Calu3 (cell line): ENCODE measurements at regions of chr19 and their contacts with region 1.

Region 1: GRCh38 chr19:15418588-15419412 is at the start of gene AKAP8L:
- DNase-seq: peak; percentile 94
- H3K4me3 Mint-ChIP-seq: peak within 1 kb of the TSS; percentile 97
- H3K27ac Mint-ChIP-seq: peak within 1 kb of the TSS; percentile 96
- H3K4me1 Mint-ChIP-seq: peaks cover 14% of the 10 kb centered on the region
- H3K27me3 Mint-ChIP-seq: no peaks in the 10 kb centered on the region
- CTCF ChIP-seq: peak; percentile 49
- total RNA-seq, gene AKAP8L: 94.0 and 96.8 TPM in 2 replicates

Region 2: GRCh38 chr19:15365264-15365663 is 53.5 kb before region 1 on chr19:
- CTCF ChIA-PET with region 1: no interaction called
- intact Hi-C with region 1: no loop called
- DNase-seq: no peak
- H3K4me3 Mint-ChIP-seq: no peak overlapping the region
- H3K27ac Mint-ChIP-seq: no peak overlapping the region
- H3K4me1 Mint-ChIP-seq: no peaks in the 10 kb centered on the region
- H3K27me3 Mint-ChIP-seq: no peaks in the 10 kb centered on the region
- CTCF ChIP-seq: no peak

Region 3: GRCh38 chr19:15379083-15379995 is 39.5 kb before region 1 on chr19 and contains the start of gene AKAP8:
- CTCF ChIA-PET with region 1: interaction called, 4 read pairs
- intact Hi-C with region 1: loop called (anchors 2 kb)
- DNase-seq: peak; percentile 93
- H3K4me3 Mint-ChIP-seq: peak within 1 kb of the TSS; percentile 77
- H3K27ac Mint-ChIP-seq: peak within 1 kb of the TSS; percentile 98
- H3K4me1 Mint-ChIP-seq: no peaks in the 10 kb centered on the region
- H3K27me3 Mint-ChIP-seq: no peaks in the 10 kb centered on the region
- CTCF ChIP-seq: no peak
- total RNA-seq, gene AKAP8: 35.8 and 38.0 TPM in 2 replicates

Region 4: GRCh38 chr19:15463861-15464371 is 45.1 kb after region 1 on chr19:
- CTCF ChIA-PET with region 1: no interaction called
- intact Hi-C with region 1: no loop called
- DNase-seq: no peak
- H3K4me3 Mint-ChIP-seq: no peak overlapping the region
- H3K27ac Mint-ChIP-seq: no peak overlapping the region
- H3K4me1 Mint-ChIP-seq: no peaks in the 10 kb centered on the region
- H3K27me3 Mint-ChIP-seq: peaks cover 37% of the 10 kb centered on the region
- CTCF ChIP-seq: no peak